AG04450 (cell line): ENCODE measurements at regions of chr2 and their contacts with region 1.

Region 1: DNA sequence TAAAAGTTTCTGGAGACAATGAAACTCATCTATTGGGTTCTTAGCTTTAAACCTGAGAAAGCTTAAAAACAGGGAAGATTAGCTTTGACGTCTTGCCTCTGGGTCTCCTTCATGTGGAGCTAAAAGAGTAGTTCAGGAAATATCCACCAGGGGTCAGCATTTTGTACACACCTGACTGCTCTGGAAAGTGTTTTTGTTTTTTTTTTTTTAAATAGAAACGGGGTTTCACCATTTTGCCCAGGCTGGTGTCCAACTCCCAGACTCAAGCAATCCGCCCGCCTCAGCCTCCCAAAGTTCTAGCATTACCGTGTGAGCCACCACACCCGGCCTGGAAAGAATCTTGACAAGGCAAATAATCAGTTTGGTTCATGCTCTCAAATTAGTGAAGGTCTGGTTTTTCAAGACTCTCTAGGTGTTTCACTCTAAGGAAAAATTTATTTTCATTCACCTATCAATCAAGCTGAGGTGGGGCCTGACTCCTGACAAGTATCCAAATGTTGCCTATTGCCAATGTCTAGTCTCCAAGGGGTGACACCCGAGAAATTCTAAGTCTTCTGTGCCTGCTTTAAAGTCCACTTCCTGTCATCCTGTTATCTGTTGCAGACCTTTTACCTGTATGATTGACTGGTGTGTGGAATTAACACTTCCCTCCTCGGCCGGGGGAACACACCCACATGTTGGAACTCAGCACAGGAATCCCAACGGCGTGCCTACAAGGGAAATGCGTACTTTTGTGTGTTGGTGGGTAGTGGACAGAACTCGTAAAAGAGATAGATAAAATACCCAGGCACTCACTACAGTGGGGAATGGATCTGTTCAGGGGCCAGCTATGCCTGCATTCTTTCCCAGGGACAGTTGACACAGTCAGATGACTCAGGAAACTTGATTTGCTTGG is 11.3 kb downstream of the IL1RN start:
- DNase-seq: peak; percentile 32
- H3K4me3 ChIP-seq: no peak overlapping the region
- H3K27ac ChIP-seq: no peak overlapping the region
- H3K27me3 ChIP-seq: peaks cover 24% of the 10 kb centered on the region
- CTCF ChIP-seq: peak; percentile 77

Region 2: DNA sequence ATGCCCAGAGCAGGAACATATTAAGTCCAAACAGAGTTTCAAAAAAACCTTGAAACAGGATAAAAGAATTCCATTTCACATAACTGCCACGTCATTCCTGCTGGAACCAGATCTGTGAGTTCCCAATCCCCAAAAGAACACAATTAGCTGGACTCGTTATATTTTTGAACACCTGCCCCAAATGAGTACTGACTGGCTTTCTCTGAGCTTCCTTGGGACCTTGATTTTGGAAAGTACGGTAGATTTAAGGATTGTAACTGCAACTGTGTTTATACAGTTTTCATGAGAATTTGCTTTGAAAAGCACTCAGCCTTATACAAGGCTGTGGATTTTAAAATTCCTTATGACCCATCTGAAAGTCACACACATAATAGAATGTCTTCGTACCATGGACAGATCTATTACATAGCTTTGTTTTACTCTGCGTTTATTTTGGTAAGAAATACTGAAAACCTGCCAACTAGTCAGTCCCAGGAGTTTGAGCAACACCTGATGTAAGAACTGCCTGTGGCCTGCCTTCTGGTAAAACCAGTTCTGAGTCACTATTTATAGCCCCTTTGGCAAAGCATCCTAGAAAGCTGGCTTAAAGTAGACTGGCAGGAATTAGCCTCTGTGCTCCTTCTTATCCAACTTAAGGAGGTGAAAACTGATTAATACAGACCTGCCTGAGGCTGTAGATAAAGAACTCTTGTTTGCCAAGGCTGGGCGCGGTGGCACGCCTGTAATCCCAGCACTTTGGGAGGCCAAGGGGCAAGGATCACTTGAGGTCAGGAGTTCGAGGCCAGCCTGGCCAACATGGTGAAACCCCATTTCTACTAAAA is 1192.2 kb before region 1 on chr2:
- CTCF ChIA-PET with region 1: no interaction called
- POLR2A ChIA-PET with region 1: no interaction called
- DNase-seq: peak; percentile 87
- H3K4me3 ChIP-seq: no peak overlapping the region
- H3K27ac ChIP-seq: peak overlapping the region; percentile 72
- H3K27me3 ChIP-seq: peaks cover 13% of the 10 kb centered on the region
- CTCF ChIP-seq: no peak

Region 3: GRCh38 chr2:113127646-113128570 is 10.8 kb before region 1 on chr2:
- CTCF ChIA-PET with region 1: interaction called, 18 read pairs
- POLR2A ChIA-PET with region 1: no interaction called
- DNase-seq: no peak
- H3K4me3 ChIP-seq: no peak overlapping the region
- H3K27ac ChIP-seq: no peak overlapping the region
- H3K27me3 ChIP-seq: peaks cover 19% of the 10 kb centered on the region
- CTCF ChIP-seq: no peak

Region 4: DNA sequence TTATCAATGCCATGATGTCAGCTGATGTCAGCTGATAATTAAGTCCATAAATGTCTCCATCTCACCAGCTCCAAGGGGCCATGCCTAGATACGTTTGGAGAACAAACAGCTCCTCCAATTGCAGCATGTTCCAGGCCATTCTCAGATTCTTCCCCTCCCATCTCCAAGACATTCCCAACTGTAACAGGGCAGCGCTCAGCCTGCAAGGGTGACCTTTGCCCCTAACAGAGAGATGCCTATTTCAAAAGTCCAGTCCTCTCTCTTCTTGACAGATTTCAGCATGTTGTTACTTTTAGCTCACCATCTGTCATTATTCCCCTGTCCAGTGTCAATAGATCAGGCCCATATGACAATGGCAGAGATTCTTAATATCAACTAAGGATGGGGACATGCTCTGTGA is 45.0 kb after region 1 on chr2:
- CTCF ChIA-PET with region 1: interaction called, 11 read pairs
- POLR2A ChIA-PET with region 1: no interaction called
- DNase-seq: no peak
- H3K4me3 ChIP-seq: no peak overlapping the region
- H3K27ac ChIP-seq: no peak overlapping the region
- H3K27me3 ChIP-seq: peaks cover 7% of the 10 kb centered on the region
- CTCF ChIP-seq: no peak

Region 5: DNA sequence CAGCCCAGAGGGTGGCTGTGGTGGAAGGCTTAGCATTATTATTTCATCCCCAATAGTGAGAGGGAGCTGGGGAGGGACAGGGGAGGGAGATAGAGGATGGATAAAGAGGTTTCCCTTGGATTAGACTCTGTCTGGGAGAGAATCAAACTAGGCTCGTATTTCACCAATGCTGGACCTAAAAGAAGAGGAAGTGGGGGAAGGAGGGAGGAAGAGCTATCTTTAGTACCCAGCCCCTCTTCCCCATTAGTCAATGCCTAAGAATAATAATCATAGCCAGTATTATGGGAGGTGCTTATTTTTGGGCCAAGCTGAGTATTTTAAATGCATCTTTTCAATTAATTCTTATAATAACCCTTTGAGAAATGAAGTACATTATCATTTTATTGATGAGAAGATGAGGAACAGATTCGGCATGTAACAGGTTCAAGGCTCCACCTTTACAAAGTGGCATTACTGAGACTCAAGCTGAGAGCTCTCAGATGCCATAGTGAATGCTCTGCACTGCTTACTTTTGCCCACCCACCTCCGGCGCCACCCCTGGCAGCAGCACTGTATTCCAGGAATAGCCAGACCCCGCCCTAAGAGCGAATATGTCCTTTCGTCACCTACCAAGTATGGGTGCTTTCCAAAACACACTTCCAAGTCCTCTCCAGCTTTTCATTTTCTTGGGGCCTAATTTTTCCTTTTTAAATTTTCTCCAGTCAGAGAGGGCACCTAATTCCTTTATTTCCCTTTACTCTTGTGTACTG is 119.0 kb after region 1 on chr2:
- CTCF ChIA-PET with region 1: interaction called, 12 read pairs
- POLR2A ChIA-PET with region 1: no interaction called
- DNase-seq: no peak
- H3K4me3 ChIP-seq: no peak overlapping the region
- H3K27ac ChIP-seq: no peak overlapping the region
- H3K27me3 ChIP-seq: no peaks in the 10 kb centered on the region
- CTCF ChIP-seq: no peak

Region 6: GRCh38 chr2:113376913-113377445 is 238.3 kb after region 1 on chr2:
- CTCF ChIA-PET with region 1: interaction called, 65 read pairs
- POLR2A ChIA-PET with region 1: no interaction called
- DNase-seq: no peak
- H3K4me3 ChIP-seq: no peak overlapping the region
- H3K27ac ChIP-seq: no peak overlapping the region
- H3K27me3 ChIP-seq: peaks cover 2% of the 10 kb centered on the region
- CTCF ChIP-seq: no peak